Activated CD4-positive, alpha-beta T cell treated with anti-CD3 and anti-CD28 coated beads for 36 hours (primary cell): ENCODE measurements at regions of chr7 and their contacts with region 1.

Region 1: DNA sequence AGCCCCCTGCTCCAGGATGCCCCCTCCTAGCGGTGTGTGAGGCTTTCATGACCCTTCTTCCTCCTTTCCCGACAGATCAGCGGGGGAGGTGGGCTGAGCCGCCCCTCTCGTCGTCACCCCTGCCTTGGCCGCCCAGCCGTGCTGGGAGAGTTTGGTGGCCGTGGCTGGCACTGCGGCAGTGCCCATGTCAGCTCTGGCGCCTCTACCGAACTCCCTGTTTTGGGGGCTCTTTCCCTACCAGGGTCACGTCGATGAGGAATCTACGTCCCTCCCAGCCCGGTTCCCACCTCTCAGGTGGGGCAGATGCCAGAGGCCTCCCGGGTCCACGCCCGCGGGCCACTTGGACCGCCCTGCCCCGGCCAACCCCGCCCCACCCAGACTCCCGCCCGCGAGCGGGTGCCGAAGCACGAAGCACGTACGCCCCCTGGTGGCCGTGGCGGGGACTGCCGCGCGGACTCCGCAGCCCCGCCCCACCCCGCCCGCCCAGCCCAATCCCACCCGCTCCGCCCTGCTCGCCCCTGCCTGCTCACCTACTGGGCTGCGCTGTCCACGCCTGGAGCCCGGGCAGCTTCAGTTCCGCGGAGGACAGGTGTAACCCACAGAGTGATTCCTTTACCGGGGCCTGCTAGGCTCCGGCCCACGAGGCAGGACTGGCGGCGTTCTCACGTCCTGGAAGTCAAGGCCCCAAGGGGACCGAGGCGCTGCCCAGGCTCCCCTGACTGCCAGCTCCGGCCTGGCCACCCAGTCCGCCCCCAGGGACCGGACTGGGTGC is 127.1 kb downstream of the UBE2H start:
- DNase-seq: peak; percentile 95
- ATAC-seq: peak; percentile 75
- H3K4me3 Mint-ChIP-seq: peak overlapping the region; percentile 86
- H3K27ac Mint-ChIP-seq: peak overlapping the region; percentile 55
- H3K4me1 Mint-ChIP-seq: peaks cover 17% of the 10 kb centered on the region
- H3K27me3 Mint-ChIP-seq: no peaks in the 10 kb centered on the region

Region 2: DNA sequence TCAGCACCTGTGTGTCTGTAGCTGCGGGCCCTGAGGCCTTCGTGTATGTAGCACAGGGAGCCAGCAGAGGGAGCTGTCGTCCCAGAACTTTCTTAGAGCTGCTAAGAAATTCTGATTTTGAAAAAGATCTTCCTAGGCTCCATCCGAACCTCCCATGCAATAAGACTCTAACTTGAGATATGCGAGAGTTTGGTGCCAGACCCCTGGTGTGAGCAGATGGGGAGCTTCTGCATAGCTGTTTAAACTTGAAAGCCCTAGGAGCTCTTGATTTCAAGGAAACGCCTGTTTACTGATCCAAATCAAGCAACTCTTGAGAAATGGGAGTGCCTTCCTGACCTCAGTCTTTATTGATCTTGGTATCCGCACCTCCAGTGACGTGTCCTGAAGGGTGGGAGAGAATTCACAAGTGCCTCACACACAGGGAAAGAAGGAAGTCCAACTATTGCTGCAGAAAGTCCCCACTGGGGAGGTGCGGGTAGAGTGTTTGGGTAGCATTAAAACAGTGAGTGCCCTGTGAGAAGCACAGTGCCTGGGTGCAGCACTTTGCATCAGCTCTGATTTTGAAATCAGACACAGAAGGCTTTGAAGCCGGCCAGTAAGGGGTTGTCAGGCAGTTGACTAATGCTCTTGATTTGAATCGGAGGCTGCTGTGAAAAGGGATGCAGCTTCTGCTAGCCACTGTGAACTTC is 457.8 kb before region 1 on chr7:
- CTCF ChIA-PET with region 1: interaction called, 13 read pairs
- POLR2A ChIA-PET with region 1: interaction called, 5 read pairs
- intact Hi-C with region 1: loop called (anchors 1 to 10 kb)
- DNase-seq: peak; percentile 92
- ATAC-seq: peak; percentile 89
- H3K4me3 Mint-ChIP-seq: peak overlapping the region; percentile 57
- H3K27ac Mint-ChIP-seq: peak overlapping the region; percentile 95
- H3K4me1 Mint-ChIP-seq: peaks cover 38% of the 10 kb centered on the region
- H3K27me3 Mint-ChIP-seq: no peaks in the 10 kb centered on the region

Region 3: DNA sequence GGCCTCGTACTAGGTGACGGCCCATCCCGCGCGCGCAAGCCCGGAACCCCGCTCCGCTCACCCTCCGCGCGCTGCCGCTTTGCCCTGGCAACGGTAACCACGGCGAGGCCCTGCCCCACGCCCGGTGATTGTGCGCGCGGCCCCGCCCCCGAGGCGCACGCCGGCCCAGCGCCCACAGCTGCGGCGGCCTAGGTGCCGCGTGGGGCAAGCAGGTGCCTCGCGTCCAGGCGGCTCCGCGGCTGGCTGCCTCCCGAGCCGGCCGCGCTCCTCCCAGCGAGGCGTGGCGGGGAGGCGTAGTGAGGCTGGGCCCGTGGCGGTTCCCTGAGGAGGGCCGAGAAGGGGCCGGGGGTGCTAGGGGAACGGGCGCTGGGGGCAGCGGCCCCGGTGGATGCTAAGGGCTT is 323.3 kb before region 1 on chr7 and contains the start of gene SMKR1:
- CTCF ChIA-PET with region 1: no interaction called
- POLR2A ChIA-PET with region 1: no interaction called
- intact Hi-C with region 1: loop called in 1 of 2 experiments (anchors 1 kb)
- DNase-seq: peak; percentile 91
- ATAC-seq: peak; percentile 95
- H3K4me3 Mint-ChIP-seq: peak within 1 kb of the TSS; percentile 71
- H3K27ac Mint-ChIP-seq: peak within 1 kb of the TSS; percentile 73
- H3K4me1 Mint-ChIP-seq: peaks cover 11% of the 10 kb centered on the region
- H3K27me3 Mint-ChIP-seq: no peaks in the 10 kb centered on the region
- total RNA-seq, gene SMKR1: 2.3 to 2.7 TPM

Region 4: GRCh38 chr7:129611246-129612111 is 214.2 kb before region 1 on chr7 and contains the start of gene NRF1:
- CTCF ChIA-PET with region 1: interaction called, 6 read pairs
- POLR2A ChIA-PET with region 1: no interaction called
- intact Hi-C with region 1: loop called (anchors 1 to 5 kb)
- DNase-seq: peak; percentile 96
- ATAC-seq: peak; percentile 87
- H3K4me3 Mint-ChIP-seq: peak within 1 kb of the TSS; percentile 90
- H3K27ac Mint-ChIP-seq: peak within 1 kb of the TSS; percentile 96
- H3K4me1 Mint-ChIP-seq: peaks cover 61% of the 10 kb centered on the region
- H3K27me3 Mint-ChIP-seq: no peaks in the 10 kb centered on the region
- total RNA-seq, gene NRF1: 20.5 to 28.9 TPM

Region 5: GRCh38 chr7:129684777-129685176 is 140.9 kb before region 1 on chr7:
- CTCF ChIA-PET with region 1: no interaction called
- POLR2A ChIA-PET with region 1: no interaction called
- intact Hi-C with region 1: no loop called
- DNase-seq: no peak
- ATAC-seq: no peak
- H3K4me3 Mint-ChIP-seq: no peak overlapping the region
- H3K27ac Mint-ChIP-seq: no peak overlapping the region
- H3K4me1 Mint-ChIP-seq: no peaks in the 10 kb centered on the region
- H3K27me3 Mint-ChIP-seq: no peaks in the 10 kb centered on the region

Region 6: DNA sequence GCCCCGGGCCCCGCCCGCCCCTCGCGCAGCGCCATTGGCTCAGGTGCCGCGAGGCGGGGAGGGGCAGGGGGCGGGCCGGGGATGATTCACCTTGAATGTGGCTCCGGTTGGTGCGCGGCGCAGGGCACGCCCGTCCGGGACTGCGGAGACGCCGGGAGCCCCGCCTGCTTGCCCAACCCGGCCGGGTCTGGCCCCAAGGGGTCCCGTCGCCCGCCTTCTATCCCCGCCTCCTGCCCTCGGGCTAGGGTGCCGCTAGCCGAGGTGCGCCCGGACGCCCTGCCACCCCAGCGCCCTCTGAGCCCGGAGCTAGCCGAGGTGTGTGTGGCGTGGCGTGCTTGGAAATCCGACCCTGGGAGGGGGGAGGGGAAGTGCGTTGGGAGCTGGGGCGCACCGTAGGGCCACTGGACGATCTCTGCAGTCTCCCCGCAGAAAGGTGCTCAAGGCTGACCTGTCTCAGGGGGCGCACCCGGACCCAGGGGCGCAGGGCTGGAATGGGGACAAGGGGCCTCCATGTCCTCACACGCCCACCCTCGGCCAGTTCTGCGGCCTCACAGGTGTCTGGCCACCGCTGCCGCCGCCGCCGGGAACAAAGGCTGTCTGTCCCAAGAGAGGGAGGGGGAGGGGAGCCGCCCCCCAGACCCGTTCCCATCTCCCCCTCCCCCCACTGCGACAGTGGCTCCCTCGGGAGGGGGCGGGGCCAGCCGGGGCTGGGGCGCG is 45.3 kb before region 1 on chr7:
- CTCF ChIA-PET with region 1: interaction called, 7 read pairs
- POLR2A ChIA-PET with region 1: no interaction called
- intact Hi-C with region 1: loop called (anchors 1 to 2 kb)
- DNase-seq: peak; percentile 92
- ATAC-seq: peak; percentile 82
- H3K4me3 Mint-ChIP-seq: peak overlapping the region; percentile 66
- H3K27ac Mint-ChIP-seq: no peak overlapping the region
- H3K4me1 Mint-ChIP-seq: peaks cover 33% of the 10 kb centered on the region
- H3K27me3 Mint-ChIP-seq: peaks cover 58% of the 10 kb centered on the region

Region 7: GRCh38 chr7:129845178-129845971 is 19.7 kb after region 1 on chr7:
- CTCF ChIA-PET with region 1: interaction called, 24 read pairs
- POLR2A ChIA-PET with region 1: no interaction called
- intact Hi-C with region 1: no loop called
- DNase-seq: no peak
- ATAC-seq: peak; percentile 14
- H3K4me3 Mint-ChIP-seq: no peak overlapping the region
- H3K27ac Mint-ChIP-seq: peak overlapping the region; percentile 65
- H3K4me1 Mint-ChIP-seq: peaks cover 47% of the 10 kb centered on the region
- H3K27me3 Mint-ChIP-seq: no peaks in the 10 kb centered on the region

Region 8: DNA sequence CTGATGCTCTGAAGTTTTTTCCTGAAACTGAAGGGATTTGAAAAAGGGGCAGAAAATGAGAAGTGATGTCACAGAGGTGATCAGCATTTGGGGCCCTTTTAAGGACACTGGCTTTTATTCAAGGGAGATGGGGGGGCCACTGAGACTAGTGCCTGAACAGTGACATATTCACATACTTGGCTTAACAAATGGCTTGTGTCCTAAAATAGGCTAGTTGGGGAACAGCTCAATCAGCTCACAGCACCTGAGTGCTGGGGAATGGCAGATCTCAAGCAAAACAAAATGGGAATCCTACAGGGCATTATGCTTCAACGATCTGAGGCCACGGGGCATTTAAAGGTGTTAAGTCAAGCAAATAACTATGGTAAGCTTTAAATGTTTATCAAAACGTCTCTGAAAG is 37.0 kb after region 1 on chr7:
- CTCF ChIA-PET with region 1: no interaction called
- POLR2A ChIA-PET with region 1: no interaction called
- intact Hi-C with region 1: no loop called
- DNase-seq: no peak
- ATAC-seq: no peak
- H3K4me3 Mint-ChIP-seq: no peak overlapping the region
- H3K27ac Mint-ChIP-seq: no peak overlapping the region
- H3K4me1 Mint-ChIP-seq: peaks cover 46% of the 10 kb centered on the region
- H3K27me3 Mint-ChIP-seq: no peaks in the 10 kb centered on the region

Region 9: DNA sequence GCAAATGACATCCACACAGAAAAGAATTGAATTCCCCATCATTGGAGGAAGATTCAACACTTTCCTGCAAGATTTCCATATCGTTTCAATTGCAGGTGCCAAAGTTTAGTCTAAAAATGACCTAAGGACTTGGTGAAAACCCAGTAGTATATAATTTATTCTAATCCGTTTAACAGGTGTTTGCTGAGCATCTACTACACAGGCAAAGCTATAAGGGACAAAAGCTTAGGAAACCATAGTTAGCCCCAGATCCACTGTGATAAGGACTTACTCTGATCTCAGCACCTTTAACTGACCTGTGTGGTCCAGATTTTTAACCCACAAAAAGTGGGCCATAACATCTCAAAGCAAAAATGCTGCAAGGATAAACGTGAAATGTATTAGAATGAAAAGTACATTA is 107.9 kb after region 1 on chr7:
- CTCF ChIA-PET with region 1: no interaction called
- POLR2A ChIA-PET with region 1: no interaction called
- intact Hi-C with region 1: no loop called
- DNase-seq: no peak
- ATAC-seq: no peak
- H3K4me3 Mint-ChIP-seq: no peak overlapping the region
- H3K27ac Mint-ChIP-seq: no peak overlapping the region
- H3K4me1 Mint-ChIP-seq: no peaks in the 10 kb centered on the region
- H3K27me3 Mint-ChIP-seq: no peaks in the 10 kb centered on the region

Region 10: GRCh38 chr7:130010689-130011412 is 185.2 kb after region 1 on chr7:
- CTCF ChIA-PET with region 1: interaction called, 42 read pairs
- POLR2A ChIA-PET with region 1: no interaction called
- intact Hi-C with region 1: loop called (anchors 1 kb)
- DNase-seq: peak; percentile 94
- ATAC-seq: peak; percentile 85
- H3K4me3 Mint-ChIP-seq: no peak overlapping the region
- H3K27ac Mint-ChIP-seq: peak overlapping the region; percentile 88
- H3K4me1 Mint-ChIP-seq: peaks cover 12% of the 10 kb centered on the region
- H3K27me3 Mint-ChIP-seq: no peaks in the 10 kb centered on the region